RWPE1 (cell line): ENCODE measurements at regions of chr13 and their contacts with region 1.

Region 1: DNA sequence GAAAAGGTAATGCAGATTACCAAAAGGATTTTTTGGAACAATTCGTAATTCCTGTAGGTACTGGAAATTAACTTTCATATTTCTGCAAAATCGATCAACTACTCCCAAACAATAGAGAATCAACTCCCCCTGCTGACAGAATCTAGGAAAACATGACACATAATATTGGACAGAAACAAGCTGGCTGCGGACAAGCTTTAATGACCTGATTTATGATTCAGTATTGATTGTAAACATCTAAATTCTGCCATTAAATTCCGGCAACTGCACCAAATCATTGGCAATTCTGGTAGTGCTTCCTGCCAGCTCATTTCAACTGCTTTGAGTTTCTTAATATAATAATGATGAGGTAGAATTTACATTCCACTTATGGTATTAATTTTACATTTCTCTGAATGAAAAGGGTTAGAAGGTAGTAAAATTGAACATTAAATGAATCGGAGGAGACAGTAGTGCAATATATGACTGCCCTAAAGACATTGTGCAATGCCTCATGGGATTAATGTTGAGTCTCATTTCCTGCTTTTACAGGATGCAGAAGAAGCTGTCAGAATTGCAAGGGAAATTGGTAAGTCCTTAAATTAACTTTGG is 146.5 kb downstream of the PCCA start:
- DNase-seq: peak; percentile 53
- H3K27ac ChIP-seq: no peak overlapping the region
- CTCF ChIP-seq: peak; percentile 65

Region 2: DNA sequence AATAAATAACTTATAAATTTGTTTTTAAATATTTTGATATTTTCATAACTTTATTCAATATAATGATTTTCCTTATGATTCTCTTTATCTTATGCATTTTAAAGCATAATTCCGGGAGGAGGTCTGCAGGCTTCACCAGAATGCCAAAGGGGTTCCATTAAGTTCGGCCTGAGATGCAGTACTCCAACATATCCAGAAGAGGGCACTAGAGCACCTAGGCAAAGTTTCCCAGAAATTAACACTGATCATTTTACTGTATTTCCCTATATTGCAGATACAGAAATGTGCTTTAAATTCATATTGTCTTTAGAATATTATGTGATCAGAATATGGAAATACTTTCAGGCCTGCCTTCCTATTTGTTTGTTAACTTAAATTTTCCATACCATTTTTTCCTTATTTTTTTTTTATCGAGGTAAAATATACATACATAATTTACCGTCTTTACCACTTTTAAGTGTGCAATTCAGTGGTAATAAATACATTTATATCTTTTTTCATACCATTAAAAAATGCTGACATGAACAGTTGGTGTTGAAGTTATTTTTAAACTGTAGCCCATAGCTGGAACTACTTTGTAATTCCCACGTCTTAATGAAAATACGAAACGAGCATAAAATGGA is 793.0 kb before region 1 on chr13:
- CTCF ChIA-PET with region 1: interaction called, 10 read pairs
- POLR2A ChIA-PET with region 1: no interaction called
- DNase-seq: peak; percentile 40
- H3K27ac ChIP-seq: no peak overlapping the region
- CTCF ChIP-seq: peak; percentile 96

Region 3: GRCh38 chr13:100124265-100124664 is 111.1 kb before region 1 on chr13:
- CTCF ChIA-PET with region 1: no interaction called
- POLR2A ChIA-PET with region 1: no interaction called
- DNase-seq: no peak
- H3K27ac ChIP-seq: no peak overlapping the region
- CTCF ChIP-seq: no peak

Region 4: GRCh38 chr13:100336795-100337516 is 101.5 kb after region 1 on chr13:
- CTCF ChIA-PET with region 1: interaction called, 11 read pairs
- POLR2A ChIA-PET with region 1: no interaction called
- DNase-seq: no peak
- H3K27ac ChIP-seq: no peak overlapping the region
- CTCF ChIP-seq: no peak